ENCODE measurements at regions of chr6 and their contacts with region 1.

Region 1: GRCh38 chr6:29016559-29017427 is 11.7 kb upstream of the ZNF311 start:
- DNase-seq: peak; percentile 66 to 90 (median 86)
- ATAC-seq: peak; percentile 78
- H3K4me3 ChIP-seq: peak overlapping the region; percentile 52 to 62
- H3K4me3 Mint-ChIP-seq: peak overlapping the region; percentile 92
- H3K27ac ChIP-seq: no peak overlapping the region
- H3K27ac Mint-ChIP-seq: peak overlapping the region; percentile 87
- H3K4me1 ChIP-seq: peaks cover 5% of the 10 kb centered on the region
- H3K4me1 Mint-ChIP-seq: peaks cover 19% of the 10 kb centered on the region
- H3K27me3 ChIP-seq: peaks cover 0 to 11% of the 10 kb centered on the region in 2 experiments
- H3K27me3 Mint-ChIP-seq: peaks cover 21% of the 10 kb centered on the region
- CTCF ChIP-seq: peak; percentile 79

Region 2: DNA sequence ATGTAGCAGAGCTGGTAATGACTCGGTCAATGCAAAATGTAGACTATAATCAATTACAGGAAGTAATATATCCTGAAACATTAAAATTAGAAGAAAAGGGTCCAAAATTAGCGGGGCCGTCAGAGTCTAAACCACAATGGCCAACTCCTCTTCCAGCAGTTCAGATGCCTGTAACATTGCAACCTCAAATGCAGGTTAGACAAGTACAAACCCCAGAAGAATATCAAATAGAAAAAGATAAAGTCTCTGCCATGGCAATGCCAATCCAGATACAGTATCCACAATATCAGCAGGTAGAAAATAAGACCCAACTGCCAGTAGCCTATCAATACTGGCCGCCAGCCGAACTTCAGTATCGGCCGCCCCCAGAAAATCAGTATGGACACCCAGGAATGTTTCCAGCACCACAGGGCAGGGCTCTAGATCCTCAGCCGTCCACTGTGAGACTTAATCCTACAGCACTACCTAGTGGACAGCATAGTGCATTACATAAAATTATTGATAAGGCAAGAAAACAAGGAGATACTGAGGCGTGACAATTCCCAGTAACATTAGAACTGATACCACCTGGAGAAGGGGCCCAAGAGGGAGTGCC is 332.8 kb before region 1 on chr6:
- CTCF ChIA-PET with region 1: interaction called, 18 read pairs
- POLR2A ChIA-PET with region 1: no interaction called
- intact Hi-C with region 1: loop called (anchors 1 kb)
- DNase-seq: peak in 3 of 9 experiments; percentile 2 to 60 (median 43)
- ATAC-seq: peak; percentile 80
- H3K4me3 ChIP-seq: no peak overlapping the region
- H3K4me3 Mint-ChIP-seq: no peak overlapping the region
- H3K27ac ChIP-seq: no peak overlapping the region
- H3K27ac Mint-ChIP-seq: no peak overlapping the region
- H3K4me1 ChIP-seq: no peaks in the 10 kb centered on the region
- H3K4me1 Mint-ChIP-seq: peaks cover 8% of the 10 kb centered on the region
- H3K27me3 ChIP-seq: peaks cover 7 to 14% of the 10 kb centered on the region in 2 experiments
- H3K27me3 Mint-ChIP-seq: peaks cover 80% of the 10 kb centered on the region
- CTCF ChIP-seq: peak; percentile 62

Region 3: GRCh38 chr6:28923318-28924102 is 93.3 kb before region 1 on chr6 and contains the start of gene TRIM27:
- CTCF ChIA-PET with region 1: interaction called, 8 read pairs
- POLR2A ChIA-PET with region 1: no interaction called
- intact Hi-C with region 1: loop called in 1 of 2 experiments (anchors 1 kb)
- DNase-seq: peak; percentile 51 to 90 (median 77)
- ATAC-seq: peak; percentile 81
- H3K4me3 ChIP-seq: peak within 1 kb of the TSS; percentile 84 to 97
- H3K4me3 Mint-ChIP-seq: peak within 1 kb of the TSS; percentile 88
- H3K27ac ChIP-seq: peak within 1 kb of the TSS; percentile 73 to 87
- H3K27ac Mint-ChIP-seq: peak within 1 kb of the TSS; percentile 94
- H3K4me1 ChIP-seq: peaks cover 33% of the 10 kb centered on the region
- H3K4me1 Mint-ChIP-seq: peaks cover 42% of the 10 kb centered on the region
- H3K27me3 ChIP-seq: no peaks in the 10 kb centered on the region
- H3K27me3 Mint-ChIP-seq: no peaks in the 10 kb centered on the region
- CTCF ChIP-seq: no peak
- total RNA-seq, gene TRIM27: 7.8 to 9.4 TPM

Region 4: GRCh38 chr6:28981833-28982475 is 34.8 kb before region 1 on chr6:
- CTCF ChIA-PET with region 1: interaction called, 15 read pairs
- POLR2A ChIA-PET with region 1: interaction called, 3 read pairs
- intact Hi-C with region 1: loop called in 1 of 2 experiments (anchors 1 kb)
- DNase-seq: peak; percentile 43 to 89 (median 70)
- ATAC-seq: peak; percentile 69
- H3K4me3 ChIP-seq: peak overlapping the region; percentile 94 to 98
- H3K4me3 Mint-ChIP-seq: peak overlapping the region; percentile 89
- H3K27ac ChIP-seq: peak overlapping the region; percentile 14 to 59
- H3K27ac Mint-ChIP-seq: peak overlapping the region; percentile 91
- H3K4me1 ChIP-seq: peaks cover 17% of the 10 kb centered on the region
- H3K4me1 Mint-ChIP-seq: peaks cover 59% of the 10 kb centered on the region
- H3K27me3 ChIP-seq: peaks cover 0 to 6% of the 10 kb centered on the region in 2 experiments
- H3K27me3 Mint-ChIP-seq: peaks cover 34% of the 10 kb centered on the region
- CTCF ChIP-seq: no peak

Region 5: DNA sequence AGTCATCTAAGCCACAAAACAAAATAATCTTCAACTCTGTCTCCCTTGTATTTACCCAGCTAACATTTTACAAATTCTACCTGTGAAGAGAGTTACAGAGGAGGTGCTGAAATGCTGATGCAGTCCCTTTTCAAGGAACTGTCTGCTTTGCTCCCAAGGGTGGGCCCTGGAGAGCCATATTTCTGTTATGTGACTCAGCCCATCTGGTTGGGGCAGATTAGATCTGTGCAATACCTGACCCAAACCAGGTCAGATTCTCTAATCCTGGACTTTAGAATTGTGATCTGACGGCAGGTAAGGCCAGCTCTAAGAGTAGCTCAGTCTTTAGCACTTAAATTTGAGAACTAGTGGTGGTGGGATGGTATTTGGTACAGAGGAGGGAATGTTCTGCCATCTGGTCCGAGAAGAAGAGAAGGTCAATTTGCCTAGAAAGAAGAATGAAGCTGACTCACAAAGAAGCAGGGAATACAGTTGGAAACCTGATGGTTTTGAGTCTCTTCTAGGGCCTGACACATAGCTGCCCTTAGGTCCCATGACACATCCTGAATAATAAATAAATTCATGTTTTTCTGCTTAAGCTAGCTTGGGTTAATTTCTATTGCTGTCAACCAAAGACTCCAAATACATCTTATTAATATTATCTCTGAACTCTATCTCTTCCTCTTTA is 19.8 kb before region 1 on chr6:
- CTCF ChIA-PET with region 1: interaction called, 10 read pairs
- POLR2A ChIA-PET with region 1: no interaction called
- intact Hi-C with region 1: no loop called
- DNase-seq: no peak
- ATAC-seq: no peak
- H3K4me3 ChIP-seq: no peak overlapping the region
- H3K4me3 Mint-ChIP-seq: no peak overlapping the region
- H3K27ac ChIP-seq: no peak overlapping the region
- H3K27ac Mint-ChIP-seq: no peak overlapping the region
- H3K4me1 ChIP-seq: no peaks in the 10 kb centered on the region
- H3K4me1 Mint-ChIP-seq: no peaks in the 10 kb centered on the region
- H3K27me3 ChIP-seq: peaks cover 0 to 4% of the 10 kb centered on the region in 2 experiments
- H3K27me3 Mint-ChIP-seq: peaks cover 15% of the 10 kb centered on the region
- CTCF ChIP-seq: no peak

Region 6: DNA sequence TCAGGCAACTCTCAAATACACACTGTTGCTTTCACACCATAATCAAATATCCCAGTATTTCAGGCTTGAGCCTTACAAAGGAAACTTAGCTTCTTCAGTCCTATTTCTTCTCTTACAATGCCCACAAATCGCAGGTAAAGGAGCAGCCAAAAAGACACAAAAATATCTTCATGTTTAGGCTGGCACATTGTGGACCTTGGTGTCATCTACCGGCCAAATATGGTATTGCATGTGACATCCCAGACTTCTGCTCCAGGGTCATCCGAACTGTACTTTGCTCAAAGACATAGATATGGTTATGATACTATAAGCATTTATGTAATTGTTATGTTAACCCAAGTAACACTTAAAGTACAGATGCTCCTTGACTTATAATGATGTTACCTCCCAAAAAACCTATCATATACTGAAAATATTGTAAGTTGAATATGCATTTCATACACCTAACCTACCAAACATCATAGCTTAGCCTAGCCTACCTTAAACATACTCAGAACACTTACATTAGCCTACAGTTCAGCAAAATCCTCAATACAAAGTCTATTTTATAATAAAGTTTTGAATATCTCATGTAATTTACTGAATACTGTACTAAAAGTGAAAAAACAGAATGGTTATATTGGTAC is 572.7 kb after region 1 on chr6:
- CTCF ChIA-PET with region 1: interaction called, 4 read pairs
- POLR2A ChIA-PET with region 1: no interaction called
- intact Hi-C with region 1: loop called (anchors 1 to 10 kb)
- DNase-seq: peak in 8 of 9 experiments; percentile 16 to 68 (median 53)
- ATAC-seq: peak; percentile 80
- H3K4me3 ChIP-seq: no peak overlapping the region
- H3K4me3 Mint-ChIP-seq: no peak overlapping the region
- H3K27ac ChIP-seq: no peak overlapping the region
- H3K27ac Mint-ChIP-seq: no peak overlapping the region
- H3K4me1 ChIP-seq: no peaks in the 10 kb centered on the region
- H3K4me1 Mint-ChIP-seq: no peaks in the 10 kb centered on the region
- H3K27me3 ChIP-seq: peaks cover 0 to 5% of the 10 kb centered on the region in 2 experiments
- H3K27me3 Mint-ChIP-seq: peaks cover 45% of the 10 kb centered on the region
- CTCF ChIP-seq: peak; percentile 98